PC-3 (cell line): ENCODE measurements at regions of chr12 and their contacts with region 1.

Region 1: DNA sequence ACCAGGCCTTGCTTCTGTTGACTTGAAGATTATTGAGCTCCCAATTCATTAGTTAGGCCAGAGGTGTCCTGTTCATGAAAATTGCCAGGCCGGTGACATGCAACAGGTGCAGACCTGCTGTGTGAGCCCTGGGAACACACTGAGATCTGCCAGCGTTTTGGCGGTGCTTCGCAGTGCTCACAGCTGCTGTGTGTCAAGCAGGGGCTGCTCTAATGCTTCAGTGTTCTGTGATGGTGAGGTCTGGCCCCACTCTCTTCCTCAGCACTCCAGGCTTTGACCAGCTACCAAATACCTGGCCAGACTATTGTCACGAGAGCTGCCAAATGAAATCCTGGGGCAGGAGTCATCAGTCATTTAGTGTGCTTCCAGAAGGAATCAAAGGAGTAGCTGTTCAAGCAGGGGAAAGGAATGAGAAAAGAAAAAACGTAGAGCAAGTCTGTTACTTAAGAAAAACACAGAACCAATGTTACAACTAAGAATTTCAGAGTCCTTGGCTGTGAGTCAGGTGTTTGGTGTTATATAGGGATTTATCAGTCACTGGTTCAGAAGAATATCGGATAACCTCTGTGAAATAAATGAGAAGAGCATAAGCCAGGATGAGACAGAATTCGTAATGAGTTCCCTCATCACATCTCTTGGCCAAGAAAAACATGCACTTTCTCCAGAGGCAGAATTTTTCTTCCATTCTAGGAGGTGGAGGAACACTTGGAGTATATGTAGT is 150.8 kb downstream of the FBXL14 start:
- DNase-seq: no peak
- ATAC-seq: no peak
- H3K4me3 ChIP-seq: no peak overlapping the region
- H3K27ac ChIP-seq: no peak overlapping the region
- H3K4me1 ChIP-seq: no peaks in the 10 kb centered on the region
- H3K27me3 ChIP-seq: no peaks in the 10 kb centered on the region
- CTCF ChIP-seq: no peak

Region 2: GRCh38 chr12:1108276-1108675 is 335.3 kb before region 1 on chr12:
- CTCF ChIA-PET with region 1: no interaction called
- POLR2A ChIA-PET with region 1: no interaction called
- intact Hi-C with region 1: no loop called
- DNase-seq: no peak
- ATAC-seq: peak; percentile 27; the same call in 1 of the 2 replicates
- H3K4me3 ChIP-seq: no peak overlapping the region
- H3K27ac ChIP-seq: no peak overlapping the region
- H3K4me1 ChIP-seq: peaks cover 11% of the 10 kb centered on the region
- H3K27me3 ChIP-seq: no peaks in the 10 kb centered on the region
- CTCF ChIP-seq: no peak

Region 3: GRCh38 chr12:1418144-1418543 is 25.4 kb before region 1 on chr12:
- CTCF ChIA-PET with region 1: no interaction called
- POLR2A ChIA-PET with region 1: interaction called, 10 read pairs
- intact Hi-C with region 1: no loop called
- DNase-seq: no peak
- ATAC-seq: no peak
- H3K4me3 ChIP-seq: no peak overlapping the region
- H3K27ac ChIP-seq: no peak overlapping the region
- H3K4me1 ChIP-seq: no peaks in the 10 kb centered on the region
- H3K27me3 ChIP-seq: no peaks in the 10 kb centered on the region
- CTCF ChIP-seq: no peak